ENCODE measurements at regions of chr20 and their contacts with region 1.

Region 1: GRCh38 chr20:13119583-13119982 is 101.5 kb upstream of the ISM1 start:
- DNase-seq: peak; percentile 52 to 80
- H3K4me3 ChIP-seq: no peak overlapping the region
- H3K4me3 Mint-ChIP-seq: no peak overlapping the region
- H3K27ac Mint-ChIP-seq: no peak overlapping the region
- H3K4me1 ChIP-seq: peaks cover 4% of the 10 kb centered on the region; the same call in 1 of the 2 replicates
- H3K4me1 Mint-ChIP-seq: no peaks in the 10 kb centered on the region
- H3K27me3 ChIP-seq: no peaks in the 10 kb centered on the region
- H3K27me3 Mint-ChIP-seq: no peaks in the 10 kb centered on the region
- CTCF ChIP-seq: peak; percentile 77 to 89

Region 2: DNA sequence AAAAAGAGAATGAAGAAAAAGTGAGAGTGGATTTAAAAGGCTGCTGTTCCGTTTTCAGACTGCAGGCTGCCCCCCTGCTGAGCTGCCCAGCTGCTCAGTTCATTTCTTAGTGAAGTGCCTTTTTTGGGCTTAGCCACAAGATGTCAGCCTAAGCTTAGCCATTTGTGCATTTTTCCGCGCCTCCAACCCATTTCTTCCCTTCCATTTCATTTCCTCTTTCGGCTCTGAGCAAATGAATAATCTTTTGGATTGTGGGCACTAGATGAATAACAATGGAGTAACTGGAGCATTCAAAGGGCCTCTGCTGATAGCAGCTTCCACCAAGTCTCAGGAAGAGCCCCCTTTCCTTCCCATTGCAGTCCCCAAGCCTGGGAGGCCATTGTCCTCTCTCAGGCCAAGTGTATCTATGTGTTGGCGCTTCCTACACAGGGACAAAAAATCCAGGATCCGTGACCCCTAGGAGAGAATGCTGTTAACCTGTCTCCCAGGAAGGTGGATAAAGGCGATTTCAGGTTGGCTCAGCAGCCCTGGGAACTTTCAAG is 194.3 kb before region 1 on chr20:
- CTCF ChIA-PET with region 1: interaction called, 5 read pairs
- POLR2A ChIA-PET with region 1: no interaction called
- intact Hi-C with region 1: loop called (anchors 1 kb)
- DNase-seq: peak; percentile 79
- H3K4me3 ChIP-seq: no peak overlapping the region
- H3K4me3 Mint-ChIP-seq: peak overlapping the region; percentile 43
- H3K27ac Mint-ChIP-seq: no peak overlapping the region
- H3K4me1 ChIP-seq: peaks cover 27% of the 10 kb centered on the region
- H3K4me1 Mint-ChIP-seq: peaks cover 23% of the 10 kb centered on the region
- H3K27me3 ChIP-seq: no peaks in the 10 kb centered on the region
- H3K27me3 Mint-ChIP-seq: no peaks in the 10 kb centered on the region
- CTCF ChIP-seq: peak; percentile 93 to 97

Region 3: DNA sequence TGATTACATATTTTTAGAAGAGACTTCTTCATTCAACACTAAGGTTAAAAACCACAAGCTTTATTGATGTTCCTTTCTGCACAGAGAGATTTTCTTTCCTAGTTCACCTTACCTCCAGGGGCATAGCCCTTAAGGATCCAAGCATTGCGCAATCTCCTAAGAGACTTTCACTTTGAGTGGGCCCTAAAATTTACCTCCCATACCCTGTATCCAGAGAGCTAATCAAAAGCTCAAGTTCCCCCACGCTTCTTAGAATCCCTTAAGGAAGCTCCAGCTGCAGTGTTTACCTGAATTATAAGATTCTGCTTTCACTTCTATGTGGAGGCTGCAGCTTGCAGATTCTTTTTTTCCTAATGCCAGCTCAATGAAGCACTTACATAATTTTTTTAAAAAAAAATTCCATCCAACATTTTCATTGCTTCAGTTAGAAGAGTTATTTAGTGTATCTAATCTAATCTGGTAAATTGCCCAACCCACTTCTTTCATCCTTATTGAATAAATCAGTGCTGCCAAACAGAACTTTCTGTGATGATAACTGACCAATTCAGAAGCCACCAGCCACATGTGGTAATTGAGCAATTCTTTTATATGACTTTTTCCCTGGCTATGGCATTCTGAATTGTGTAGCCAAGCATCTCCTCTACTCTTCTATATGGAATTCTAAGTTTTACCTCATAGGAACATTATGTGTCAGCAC is 135.4 kb before region 1 on chr20:
- CTCF ChIA-PET with region 1: no interaction called
- POLR2A ChIA-PET with region 1: no interaction called
- intact Hi-C with region 1: no loop called
- DNase-seq: no peak
- H3K4me3 ChIP-seq: no peak overlapping the region
- H3K4me3 Mint-ChIP-seq: no peak overlapping the region
- H3K27ac Mint-ChIP-seq: no peak overlapping the region
- H3K4me1 ChIP-seq: peaks cover 17% of the 10 kb centered on the region
- H3K4me1 Mint-ChIP-seq: peaks cover 22% of the 10 kb centered on the region
- H3K27me3 ChIP-seq: no peaks in the 10 kb centered on the region
- H3K27me3 Mint-ChIP-seq: no peaks in the 10 kb centered on the region
- CTCF ChIP-seq: no peak

Region 4: DNA sequence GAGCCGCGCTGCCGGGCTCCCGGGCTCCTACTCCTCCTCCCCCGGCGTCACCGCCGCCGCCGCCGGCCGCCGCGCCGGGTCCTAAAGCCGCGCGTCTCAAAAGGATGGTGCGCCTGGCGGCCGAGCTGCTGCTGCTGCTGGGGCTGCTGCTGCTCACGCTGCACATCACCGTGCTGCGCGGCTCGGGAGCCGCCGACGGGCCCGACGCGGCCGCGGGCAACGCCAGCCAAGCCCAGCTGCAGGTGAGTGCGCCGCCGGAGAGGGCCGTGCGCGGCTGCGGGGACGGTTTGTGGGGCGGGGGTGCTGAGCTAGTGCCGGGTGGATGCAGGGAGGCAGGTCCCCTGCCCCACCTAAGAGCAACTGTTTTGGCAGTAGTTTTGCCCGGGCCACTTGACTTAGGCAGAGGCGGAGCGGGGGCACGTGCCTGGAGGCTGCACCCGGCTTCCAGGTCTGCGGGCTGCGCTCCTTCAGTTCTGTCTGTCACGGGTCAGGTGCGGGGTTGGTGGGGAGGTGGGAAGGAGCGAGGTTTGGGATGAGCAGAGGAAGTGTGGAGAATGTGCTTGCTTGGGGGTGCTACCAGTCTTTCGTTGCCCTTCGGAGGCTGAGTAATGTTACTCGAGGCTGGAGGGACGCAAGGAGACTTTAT is 102.2 kb after region 1 on chr20:
- CTCF ChIA-PET with region 1: no interaction called
- POLR2A ChIA-PET with region 1: no interaction called
- intact Hi-C with region 1: loop called (anchors 5 kb)
- DNase-seq: peak; percentile 65 to 77
- H3K4me3 ChIP-seq: peak overlapping the region; percentile 54
- H3K4me3 Mint-ChIP-seq: peak overlapping the region; percentile 69
- H3K27ac Mint-ChIP-seq: no peak overlapping the region
- H3K4me1 ChIP-seq: peaks cover 10% of the 10 kb centered on the region
- H3K4me1 Mint-ChIP-seq: no peaks in the 10 kb centered on the region
- H3K27me3 ChIP-seq: no peaks in the 10 kb centered on the region; the same call in 1 of the 2 replicates
- H3K27me3 Mint-ChIP-seq: peaks cover 10% of the 10 kb centered on the region
- CTCF ChIP-seq: no peak

Region 5: DNA sequence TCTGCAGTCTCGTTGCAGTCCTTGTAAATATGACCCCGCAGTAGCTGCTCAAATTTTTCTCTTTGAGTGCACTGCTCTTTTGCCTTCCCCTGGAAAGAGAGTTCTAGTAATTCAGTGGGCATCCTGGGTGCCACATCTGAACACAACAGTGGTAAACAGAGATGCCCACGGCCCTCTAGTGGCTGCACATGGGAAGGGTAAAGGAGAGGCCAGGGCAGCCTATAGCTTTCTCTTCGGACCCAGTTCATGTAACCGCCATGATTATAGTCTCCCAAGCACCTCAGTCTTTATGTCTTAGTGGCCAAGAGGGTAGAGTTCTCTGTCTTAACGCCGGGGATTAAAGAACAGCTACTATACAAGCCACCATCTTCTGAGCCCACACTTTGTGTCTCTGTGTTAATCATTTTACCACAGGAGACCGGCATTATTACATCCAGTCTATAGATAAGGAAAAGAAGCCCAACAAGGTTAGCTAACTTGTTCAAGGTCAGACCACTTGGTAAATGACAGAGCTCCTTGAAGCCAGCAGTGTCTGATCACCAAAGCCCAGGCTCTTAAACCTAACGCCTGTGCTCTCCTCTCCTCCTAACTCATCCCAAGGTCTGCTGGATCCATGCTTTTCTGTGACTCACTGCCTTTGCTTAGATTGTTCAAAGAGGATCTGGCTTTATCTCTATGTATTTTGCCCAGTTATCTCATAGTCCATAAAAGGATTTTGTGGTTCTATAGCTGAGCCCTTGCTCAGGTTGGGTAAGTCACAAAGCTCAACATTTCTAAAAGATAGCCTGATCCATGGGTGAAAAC is 183.3 kb after region 1 on chr20:
- CTCF ChIA-PET with region 1: interaction called, 9 read pairs
- POLR2A ChIA-PET with region 1: no interaction called
- intact Hi-C with region 1: loop called (anchors 1 kb)
- DNase-seq: peak; percentile 62 to 71
- H3K4me3 ChIP-seq: no peak overlapping the region
- H3K4me3 Mint-ChIP-seq: peak overlapping the region; percentile 42
- H3K27ac Mint-ChIP-seq: peak overlapping the region; percentile 89
- H3K4me1 ChIP-seq: peaks cover 32% of the 10 kb centered on the region
- H3K4me1 Mint-ChIP-seq: peaks cover 18% of the 10 kb centered on the region
- H3K27me3 ChIP-seq: no peaks in the 10 kb centered on the region
- H3K27me3 Mint-ChIP-seq: no peaks in the 10 kb centered on the region
- CTCF ChIP-seq: peak; percentile 56 to 66

Region 6: GRCh38 chr20:13430346-13431002 is 310.9 kb after region 1 on chr20:
- CTCF ChIA-PET with region 1: no interaction called
- POLR2A ChIA-PET with region 1: no interaction called
- intact Hi-C with region 1: loop called (anchors 10 kb)
- DNase-seq: peak; percentile 41 to 42
- H3K4me3 ChIP-seq: no peak overlapping the region
- H3K4me3 Mint-ChIP-seq: peak overlapping the region; percentile 18
- H3K27ac Mint-ChIP-seq: peak overlapping the region; percentile 64
- H3K4me1 ChIP-seq: peaks cover 17% of the 10 kb centered on the region
- H3K4me1 Mint-ChIP-seq: peaks cover 13% of the 10 kb centered on the region
- H3K27me3 ChIP-seq: no peaks in the 10 kb centered on the region
- H3K27me3 Mint-ChIP-seq: no peaks in the 10 kb centered on the region
- CTCF ChIP-seq: no peak

Region 7: DNA sequence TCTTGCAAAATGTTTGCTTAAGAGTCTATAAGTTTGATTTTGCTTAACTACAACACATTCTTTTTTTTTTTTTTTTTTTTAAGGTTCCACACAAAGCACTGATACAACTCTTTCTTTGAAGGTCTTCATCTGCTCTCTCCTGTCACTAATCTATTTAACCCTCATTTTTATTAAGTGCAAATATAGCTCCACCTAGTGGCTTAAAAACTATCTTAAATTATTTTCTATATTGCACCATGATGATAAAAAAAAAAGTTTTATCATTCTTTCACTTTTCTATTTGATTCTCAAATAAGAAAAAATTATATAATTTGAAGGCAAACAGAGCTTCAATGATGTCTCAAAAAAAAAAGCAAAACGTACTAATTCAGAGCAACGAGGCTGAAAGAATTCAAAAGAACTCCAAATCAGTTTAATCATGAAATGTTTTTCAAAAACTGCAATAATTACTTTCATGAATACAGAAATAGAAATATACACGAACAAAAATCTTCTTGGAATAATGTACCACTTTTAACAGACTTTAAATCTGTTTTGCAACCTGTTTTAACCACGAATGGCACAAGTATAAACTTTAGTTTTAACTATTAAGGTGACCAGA is 652.4 kb after region 1 on chr20:
- CTCF ChIA-PET with region 1: no interaction called
- POLR2A ChIA-PET with region 1: no interaction called
- intact Hi-C with region 1: loop called (anchors 5 kb)
- DNase-seq: no peak
- H3K4me3 ChIP-seq: no peak overlapping the region
- H3K4me3 Mint-ChIP-seq: no peak overlapping the region
- H3K27ac Mint-ChIP-seq: no peak overlapping the region
- H3K4me1 ChIP-seq: no peaks in the 10 kb centered on the region; the same call in 1 of the 2 replicates
- H3K4me1 Mint-ChIP-seq: no peaks in the 10 kb centered on the region
- H3K27me3 ChIP-seq: no peaks in the 10 kb centered on the region
- H3K27me3 Mint-ChIP-seq: no peaks in the 10 kb centered on the region
- CTCF ChIP-seq: peak in 1 of 2 experiments; percentile 60